A673 (cell line): ENCODE measurements at regions of chr4 and their contacts with region 1.

Region 1: DNA sequence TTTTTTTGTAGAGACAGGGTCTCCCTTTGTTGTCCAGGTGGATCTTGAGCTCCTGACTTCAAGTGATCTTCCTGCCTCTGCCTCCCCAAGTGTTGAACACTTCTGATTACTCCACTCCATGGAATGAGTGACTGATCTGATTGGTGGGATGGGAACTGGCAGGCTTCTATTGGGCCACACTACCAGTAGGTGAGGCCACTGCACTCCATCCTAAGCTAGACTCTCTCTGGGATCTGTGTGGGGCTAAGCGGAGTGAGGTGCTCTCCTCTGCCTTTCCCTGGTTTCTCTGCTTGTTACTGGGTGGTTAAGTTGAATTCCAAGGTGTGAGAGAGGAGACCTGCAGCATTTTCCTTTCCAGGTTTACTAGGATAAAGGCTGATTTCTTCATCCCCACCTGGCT is 58.7 kb downstream of the ENOPH1 start:
- DNase-seq: no peak
- H3K4me3 ChIP-seq: no peak overlapping the region
- H3K27ac ChIP-seq: no peak overlapping the region
- H3K4me1 ChIP-seq: no peaks in the 10 kb centered on the region
- H3K27me3 ChIP-seq: no peaks in the 10 kb centered on the region
- CTCF ChIP-seq: no peak

Region 2: GRCh38 chr4:82428969-82429727 is 59.9 kb before region 1 on chr4:
- CTCF ChIA-PET with region 1: no interaction called
- POLR2A ChIA-PET with region 1: interaction called, 11 read pairs
- intact Hi-C with region 1: no loop called
- DNase-seq: peak; percentile 89
- H3K4me3 ChIP-seq: peak overlapping the region; percentile 88
- H3K27ac ChIP-seq: peak overlapping the region; percentile 99
- H3K4me1 ChIP-seq: no peaks in the 10 kb centered on the region
- H3K27me3 ChIP-seq: no peaks in the 10 kb centered on the region
- CTCF ChIP-seq: peak; percentile 58